Activated naive CD4-positive, alpha-beta T cell treated with anti-CD3 and anti-CD28 coated beads for 36 hours (primary cell): ENCODE measurements at regions of chr14 and their contacts with region 1.

Region 1: DNA sequence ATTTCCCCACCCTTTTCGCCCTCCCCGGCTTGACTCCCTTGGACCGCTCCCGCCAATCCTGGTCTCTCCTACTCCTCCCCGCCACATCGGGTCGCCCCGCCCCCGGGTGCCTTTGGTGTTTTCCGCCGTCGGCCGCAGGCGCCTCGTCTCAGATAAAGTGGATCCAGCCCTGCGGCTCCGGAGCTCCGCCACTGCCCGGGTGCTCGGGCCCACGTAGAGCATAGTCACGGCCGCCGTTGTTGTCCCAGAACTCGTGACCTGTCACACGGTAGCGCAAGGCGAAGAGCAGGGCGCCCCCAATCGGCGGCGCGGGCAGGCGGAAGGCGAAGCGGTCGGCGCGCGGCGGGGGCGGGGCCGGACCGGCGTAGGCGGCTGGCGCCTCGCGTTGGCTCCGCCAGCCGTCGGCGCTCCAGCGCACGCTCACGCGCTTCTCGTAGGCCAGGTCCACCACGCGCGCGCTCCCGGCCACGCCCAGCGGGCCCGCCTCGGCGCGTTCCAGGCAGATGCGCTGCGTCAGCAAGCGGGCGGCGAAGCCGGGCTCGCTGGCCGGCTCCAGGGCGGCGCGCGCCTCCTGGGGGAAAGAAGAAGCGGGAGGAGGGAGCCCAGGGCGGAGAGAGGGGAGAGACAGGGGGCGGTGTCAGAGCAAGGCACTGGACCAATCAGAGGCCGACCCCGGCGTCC is 1.2 kb downstream of the PPP1R3E start:
- DNase-seq: peak; percentile 96
- H3K4me3 Mint-ChIP-seq: peak overlapping the region; percentile 90
- H3K27ac Mint-ChIP-seq: peak overlapping the region; percentile 92
- H3K4me1 Mint-ChIP-seq: peaks cover 12% of the 10 kb centered on the region
- H3K27me3 Mint-ChIP-seq: peaks cover 13% of the 10 kb centered on the region

Region 2: GRCh38 chr14:22589096-22589839 is 712.2 kb before region 1 on chr14 and contains the start of gene DAD1:
- CTCF ChIA-PET with region 1: no interaction called
- intact Hi-C with region 1: loop called (anchors 1 kb)
- DNase-seq: peak; percentile 100
- H3K4me3 Mint-ChIP-seq: peak within 1 kb of the TSS; percentile 98
- H3K27ac Mint-ChIP-seq: peak within 1 kb of the TSS; percentile 99
- H3K4me1 Mint-ChIP-seq: peaks cover 68% of the 10 kb centered on the region
- H3K27me3 Mint-ChIP-seq: no peaks in the 10 kb centered on the region
- total RNA-seq, gene DAD1: 219 to 226 TPM

Region 3: DNA sequence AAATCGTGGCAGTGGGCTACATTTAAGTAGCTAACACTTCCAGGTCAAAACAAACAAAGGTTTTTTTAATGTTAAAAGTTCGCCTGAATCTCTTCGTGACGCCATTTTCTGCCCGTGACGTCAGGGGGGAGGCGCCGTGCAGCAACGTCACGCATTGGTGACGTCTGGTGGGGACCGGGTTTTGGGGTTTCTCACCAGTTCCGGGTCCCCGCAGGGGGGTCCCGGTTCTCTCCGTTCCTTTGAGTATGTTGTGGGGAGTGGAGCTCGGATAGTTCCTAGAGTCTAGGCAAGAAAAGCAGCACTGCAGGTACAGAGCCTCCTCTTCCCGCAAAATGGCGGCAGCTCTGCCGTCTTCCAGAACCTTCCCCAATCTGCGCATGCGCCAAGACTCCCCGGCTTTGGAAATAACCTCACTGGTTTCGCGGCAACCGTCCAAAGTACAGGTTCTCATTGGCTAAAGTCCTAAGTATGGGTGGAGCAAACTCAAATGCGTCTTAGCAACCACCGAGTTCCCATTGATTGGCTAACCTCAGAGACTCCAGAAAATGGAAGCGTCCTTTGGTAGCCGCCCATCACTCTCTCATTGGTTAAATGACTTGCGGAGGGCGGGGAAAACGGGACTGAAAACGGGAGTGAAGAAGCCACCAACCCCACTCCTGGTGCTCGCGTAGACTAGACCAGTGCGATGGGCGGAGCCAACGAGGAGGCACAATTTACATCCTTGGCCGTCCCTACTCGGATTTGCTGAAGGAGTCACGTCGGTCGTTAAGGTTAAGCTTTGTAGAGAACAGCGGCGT is 382.4 kb before region 1 on chr14 and contains the start of gene RBM23:
- CTCF ChIA-PET with region 1: no interaction called
- intact Hi-C with region 1: loop called (anchors 1 kb)
- DNase-seq: peak; percentile 100
- H3K4me3 Mint-ChIP-seq: peak within 1 kb of the TSS; percentile 94
- H3K27ac Mint-ChIP-seq: peak within 1 kb of the TSS; percentile 99
- H3K4me1 Mint-ChIP-seq: peaks cover 42% of the 10 kb centered on the region
- H3K27me3 Mint-ChIP-seq: peaks cover 3% of the 10 kb centered on the region
- total RNA-seq, gene RBM23: 53.5 to 61.2 TPM

Region 4: DNA sequence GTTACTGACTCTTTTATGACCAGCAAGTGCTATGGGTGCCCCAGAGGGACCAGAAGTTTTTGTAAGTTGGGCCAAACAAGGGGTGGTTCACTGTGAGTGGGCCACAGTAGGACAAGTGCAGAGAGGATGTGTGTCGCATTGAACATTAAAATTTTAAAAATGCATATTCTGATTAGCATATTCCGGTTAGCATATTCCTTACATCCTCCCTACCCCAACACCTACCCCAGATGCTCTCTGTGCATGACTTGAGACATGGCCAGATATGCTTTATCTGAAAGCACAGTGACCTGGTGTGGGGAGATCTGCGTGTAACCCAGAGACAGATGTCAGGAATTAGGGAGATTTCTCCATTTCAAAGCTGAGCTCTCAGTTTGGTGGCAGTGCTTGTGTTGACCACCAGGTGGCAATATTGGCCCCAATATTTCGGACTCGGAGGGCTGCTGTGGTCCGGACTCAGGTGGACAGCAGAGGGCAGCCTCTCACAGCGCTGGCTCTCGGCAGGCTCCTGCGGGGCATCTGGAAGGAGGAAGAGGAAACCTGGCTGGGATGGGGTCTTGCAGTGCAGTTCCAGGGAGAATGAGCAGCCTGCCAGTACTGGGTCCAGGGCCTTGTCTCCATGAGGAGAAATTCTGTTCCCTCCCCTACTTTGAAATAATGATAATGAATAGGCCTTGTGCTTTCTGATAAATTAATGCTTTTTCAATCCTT is 180.7 kb before region 1 on chr14:
- CTCF ChIA-PET with region 1: interaction called, 12 read pairs
- intact Hi-C with region 1: loop called (anchors 1 kb)
- DNase-seq: peak; percentile 94
- H3K4me3 Mint-ChIP-seq: no peak overlapping the region
- H3K27ac Mint-ChIP-seq: peak overlapping the region; percentile 87
- H3K4me1 Mint-ChIP-seq: peaks cover 41% of the 10 kb centered on the region
- H3K27me3 Mint-ChIP-seq: no peaks in the 10 kb centered on the region

Region 5: GRCh38 chr14:23259426-23259825 is 42.0 kb before region 1 on chr14:
- CTCF ChIA-PET with region 1: interaction called, 12 read pairs
- intact Hi-C with region 1: no loop called
- DNase-seq: no peak
- H3K4me3 Mint-ChIP-seq: no peak overlapping the region
- H3K27ac Mint-ChIP-seq: no peak overlapping the region
- H3K4me1 Mint-ChIP-seq: no peaks in the 10 kb centered on the region
- H3K27me3 Mint-ChIP-seq: peaks cover 14% of the 10 kb centered on the region

Region 6: DNA sequence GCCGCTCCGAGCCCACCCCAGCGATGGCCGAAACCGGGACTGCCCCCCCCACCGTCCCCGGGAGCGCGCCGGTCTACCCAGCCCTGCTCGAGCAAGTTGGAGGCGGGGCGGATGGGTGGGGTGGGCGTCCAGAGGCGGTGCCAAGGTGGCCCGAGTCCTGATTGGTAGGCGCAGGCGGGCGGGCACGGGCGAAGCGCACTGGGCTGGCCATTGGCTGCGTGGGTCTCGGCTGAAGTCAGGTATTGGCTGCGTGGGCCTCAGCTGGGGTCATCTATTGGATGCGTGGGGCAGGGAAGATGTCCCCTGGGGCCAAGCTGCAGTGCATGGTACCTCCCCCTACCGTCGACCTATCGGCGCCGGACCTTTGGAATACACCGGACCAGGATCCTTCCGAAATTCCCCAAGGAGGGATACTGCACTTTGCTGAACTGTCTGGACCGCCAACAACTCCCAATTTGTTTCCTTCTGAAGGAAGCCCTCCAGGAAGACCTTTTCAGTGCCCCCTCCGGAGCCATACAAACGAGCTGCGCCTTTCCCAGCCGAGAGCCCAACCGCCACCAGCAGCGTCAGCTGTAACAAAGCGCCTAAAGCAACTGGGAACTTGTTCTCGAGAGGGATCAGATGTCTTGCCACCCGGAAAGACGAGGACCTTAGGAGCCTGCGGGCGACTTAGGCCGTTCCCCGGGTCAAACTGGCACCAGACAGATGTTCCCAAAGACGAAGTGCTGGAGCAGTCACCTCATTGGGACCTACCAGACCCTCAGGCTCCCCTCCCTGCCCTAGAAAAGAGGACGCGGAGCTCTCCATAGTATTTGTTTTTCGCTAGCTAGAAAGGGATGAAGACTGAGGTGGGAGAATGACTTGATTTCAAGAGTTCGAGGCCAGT is 15.2 kb before region 1 on chr14 and contains the start of gene HOMEZ:
- CTCF ChIA-PET with region 1: interaction called, 33 read pairs
- intact Hi-C with region 1: loop called (anchors 1 kb)
- DNase-seq: peak; percentile 99
- H3K4me3 Mint-ChIP-seq: peak within 1 kb of the TSS; percentile 99
- H3K27ac Mint-ChIP-seq: peak within 1 kb of the TSS; percentile 96
- H3K4me1 Mint-ChIP-seq: peaks cover 29% of the 10 kb centered on the region
- H3K27me3 Mint-ChIP-seq: no peaks in the 10 kb centered on the region
- total RNA-seq, gene HOMEZ: 6.3 to 7.8 TPM

Region 7: GRCh38 chr14:23555882-23556699 is 254.7 kb after region 1 on chr14 and contains the start of gene THTPA:
- CTCF ChIA-PET with region 1: no interaction called
- intact Hi-C with region 1: loop called (anchors 1 kb)
- DNase-seq: peak; percentile 96
- H3K4me3 Mint-ChIP-seq: peak within 1 kb of the TSS; percentile 95
- H3K27ac Mint-ChIP-seq: peak within 1 kb of the TSS; percentile 94
- H3K4me1 Mint-ChIP-seq: peaks cover 38% of the 10 kb centered on the region
- H3K27me3 Mint-ChIP-seq: no peaks in the 10 kb centered on the region
- total RNA-seq, gene THTPA: 6.2 to 6.6 TPM

Region 8: DNA sequence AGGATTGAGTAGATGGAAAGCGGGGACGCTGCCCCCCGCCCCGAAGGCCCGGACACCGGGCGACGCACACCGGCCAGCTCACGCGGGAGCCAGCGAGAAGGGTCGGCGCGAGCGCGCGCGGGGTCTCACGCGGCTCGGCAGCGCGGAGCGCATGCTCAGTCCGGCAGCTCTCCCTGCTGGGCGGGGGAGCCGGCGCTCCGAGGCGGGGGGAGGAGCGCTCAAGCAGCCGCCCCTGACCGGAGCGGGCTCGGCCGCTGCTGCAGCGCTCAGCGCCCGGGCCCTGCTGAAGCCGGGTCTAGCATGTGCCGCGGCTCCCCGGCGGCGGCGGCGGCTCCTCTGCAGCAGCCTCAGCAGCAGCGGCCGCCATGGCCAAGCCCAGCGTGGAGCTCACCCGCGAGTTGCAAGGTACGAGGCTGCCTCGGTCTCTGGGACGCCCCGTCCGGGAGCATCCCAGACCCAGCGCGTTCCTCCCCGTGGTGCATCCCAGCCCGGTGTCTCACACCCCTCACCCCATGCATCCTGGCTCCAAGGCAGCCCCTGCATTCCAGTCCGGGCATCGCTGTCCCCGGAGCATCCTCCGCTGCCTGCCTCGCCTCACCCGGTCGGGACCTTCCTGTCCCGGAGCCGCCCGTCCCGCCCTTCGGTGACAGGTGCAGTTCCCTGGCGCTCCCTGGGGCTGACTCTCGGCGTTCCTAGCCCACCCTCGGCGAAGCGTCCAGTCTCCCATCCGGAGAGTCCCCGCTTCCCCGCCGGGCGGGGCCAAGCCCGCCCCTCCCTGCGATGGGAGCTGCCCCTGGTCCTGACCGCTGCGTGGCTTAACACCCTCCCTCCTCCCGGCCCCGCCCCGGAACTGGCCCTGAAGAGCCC is 750.6 kb after region 1 on chr14 and contains the start of gene CARMIL3:
- CTCF ChIA-PET with region 1: no interaction called
- intact Hi-C with region 1: no loop called
- DNase-seq: peak; percentile 60
- H3K4me3 Mint-ChIP-seq: peak within 1 kb of the TSS; percentile 65
- H3K27ac Mint-ChIP-seq: peak within 1 kb of the TSS; percentile 28
- H3K4me1 Mint-ChIP-seq: peaks cover 18% of the 10 kb centered on the region
- H3K27me3 Mint-ChIP-seq: peaks cover 2% of the 10 kb centered on the region
- total RNA-seq, gene CARMIL3: 0.48 to 0.99 TPM